ENCODE measurements at regions of chr7 and their contacts with region 1.

Region 1: GRCh38 chr7:131654668-131655326 is 98.4 kb upstream of the PODXL start:
- DNase-seq: peak; percentile 97
- ATAC-seq: peak; percentile 87
- H3K4me3 Mint-ChIP-seq: no peak overlapping the region
- H3K27ac Mint-ChIP-seq: no peak overlapping the region
- H3K4me1 Mint-ChIP-seq: peaks cover 46% of the 10 kb centered on the region
- H3K27me3 Mint-ChIP-seq: peaks cover 8% of the 10 kb centered on the region; the same call in 1 of the 2 replicates
- CTCF ChIP-seq: peak; percentile 99

Region 2: GRCh38 chr7:131507592-131508331 is 147.0 kb before region 1 on chr7:
- CTCF ChIA-PET with region 1: interaction called, 22 read pairs
- POLR2A ChIA-PET with region 1: no interaction called
- DNase-seq: peak; percentile 81
- ATAC-seq: peak; percentile 64
- H3K4me3 Mint-ChIP-seq: no peak overlapping the region
- H3K27ac Mint-ChIP-seq: peak overlapping the region; percentile 91
- H3K4me1 Mint-ChIP-seq: peaks cover 47% of the 10 kb centered on the region
- H3K27me3 Mint-ChIP-seq: no peaks in the 10 kb centered on the region
- CTCF ChIP-seq: peak; percentile 77

Region 3: DNA sequence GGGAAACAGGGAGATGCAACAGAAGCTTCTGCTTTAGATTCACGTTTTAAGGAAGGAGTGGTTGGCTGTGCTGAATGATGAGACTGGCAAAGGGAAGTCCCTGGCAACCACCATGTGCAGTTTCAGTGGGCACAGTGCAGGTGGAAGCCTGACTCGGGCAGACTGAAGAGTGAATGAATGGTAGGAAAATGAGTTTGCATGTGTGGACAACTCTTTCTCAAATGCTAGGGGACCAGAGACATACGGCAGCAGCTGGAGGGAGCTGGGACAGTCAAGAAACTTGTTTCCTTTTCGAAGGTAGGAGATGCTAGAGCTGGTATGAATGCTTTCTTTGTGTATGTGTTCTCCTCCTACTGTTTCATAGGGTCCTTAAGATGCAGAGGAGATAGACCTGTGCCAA is 127.3 kb before region 1 on chr7:
- CTCF ChIA-PET with region 1: interaction called, 12 read pairs
- POLR2A ChIA-PET with region 1: no interaction called
- DNase-seq: no peak
- ATAC-seq: no peak
- H3K4me3 Mint-ChIP-seq: no peak overlapping the region
- H3K27ac Mint-ChIP-seq: peak overlapping the region; percentile 58; the same call in 1 of the 2 replicates
- H3K4me1 Mint-ChIP-seq: peaks cover 75% of the 10 kb centered on the region
- H3K27me3 Mint-ChIP-seq: no peaks in the 10 kb centered on the region
- CTCF ChIP-seq: no peak

Region 4: DNA sequence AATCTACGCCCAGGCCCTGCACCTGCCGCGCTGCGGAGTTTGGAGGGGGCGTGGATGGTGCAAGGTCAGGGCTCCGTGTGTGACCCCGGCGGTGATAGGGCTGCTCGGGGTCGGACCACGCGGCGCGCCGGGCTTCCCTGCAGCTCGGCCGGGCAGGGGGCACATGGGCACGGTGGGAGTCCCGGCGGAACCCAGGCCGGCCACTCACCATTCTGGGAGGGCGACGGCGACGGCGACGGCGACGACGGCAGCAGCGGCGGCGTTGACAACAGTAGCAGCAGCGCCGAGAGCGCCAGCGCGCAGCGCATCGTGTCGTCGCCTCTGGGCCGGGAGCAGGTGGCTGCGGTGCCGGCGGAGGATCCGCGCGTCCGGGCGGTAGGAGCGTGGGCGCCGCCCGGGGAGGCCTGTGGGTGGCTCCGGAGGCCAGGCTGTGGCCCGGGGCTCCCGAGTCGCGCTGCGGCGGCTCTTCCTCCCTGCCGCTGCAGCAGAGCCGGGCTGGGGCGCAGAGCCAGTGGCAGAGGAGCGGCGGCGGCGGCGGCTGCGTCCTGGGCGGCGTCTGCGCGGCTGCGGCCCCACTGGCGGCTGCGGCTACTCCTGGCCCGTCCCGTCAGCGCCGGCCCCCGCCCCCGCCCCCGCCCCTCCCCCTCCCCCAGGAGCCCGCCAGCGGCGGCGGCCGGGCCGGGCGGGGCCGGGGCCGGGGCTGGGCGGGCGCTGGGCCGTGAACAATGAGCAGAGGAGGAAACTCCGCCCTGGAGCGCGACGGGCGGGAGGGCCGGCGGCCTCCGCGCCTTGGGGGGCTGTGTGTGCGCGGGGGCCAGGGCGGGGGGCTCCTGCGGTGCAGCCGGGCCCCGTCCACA is 98.5 kb before region 1 on chr7 and contains the start of gene PODXL:
- CTCF ChIA-PET with region 1: interaction called, 27 read pairs
- POLR2A ChIA-PET with region 1: interaction called, 3 read pairs
- DNase-seq: peak; percentile 79
- ATAC-seq: peak; percentile 71
- H3K4me3 Mint-ChIP-seq: peak within 1 kb of the TSS; percentile 95
- H3K27ac Mint-ChIP-seq: peak within 1 kb of the TSS; percentile 96
- H3K4me1 Mint-ChIP-seq: peaks cover 62% of the 10 kb centered on the region
- H3K27me3 Mint-ChIP-seq: no peaks in the 10 kb centered on the region; the same call in 1 of the 2 replicates
- CTCF ChIP-seq: no peak
- total RNA-seq, gene PODXL: 483 to 623 TPM (median 614 TPM) in 3 replicates

Region 5: GRCh38 chr7:131619336-131620305 is 35.2 kb before region 1 on chr7:
- CTCF ChIA-PET with region 1: interaction called, 25 read pairs
- POLR2A ChIA-PET with region 1: no interaction called
- DNase-seq: no peak
- ATAC-seq: no peak
- H3K4me3 Mint-ChIP-seq: no peak overlapping the region
- H3K27ac Mint-ChIP-seq: 0 out of 2 replicates have a peak overlapping the region, but pooled peaks have one; percentile 76
- H3K4me1 Mint-ChIP-seq: peaks cover 59% of the 10 kb centered on the region
- H3K27me3 Mint-ChIP-seq: peaks cover 14% of the 10 kb centered on the region
- CTCF ChIP-seq: no peak